HepG2 (cell line): ENCODE measurements at regions of chr2 and their contacts with region 1.

Region 1: DNA sequence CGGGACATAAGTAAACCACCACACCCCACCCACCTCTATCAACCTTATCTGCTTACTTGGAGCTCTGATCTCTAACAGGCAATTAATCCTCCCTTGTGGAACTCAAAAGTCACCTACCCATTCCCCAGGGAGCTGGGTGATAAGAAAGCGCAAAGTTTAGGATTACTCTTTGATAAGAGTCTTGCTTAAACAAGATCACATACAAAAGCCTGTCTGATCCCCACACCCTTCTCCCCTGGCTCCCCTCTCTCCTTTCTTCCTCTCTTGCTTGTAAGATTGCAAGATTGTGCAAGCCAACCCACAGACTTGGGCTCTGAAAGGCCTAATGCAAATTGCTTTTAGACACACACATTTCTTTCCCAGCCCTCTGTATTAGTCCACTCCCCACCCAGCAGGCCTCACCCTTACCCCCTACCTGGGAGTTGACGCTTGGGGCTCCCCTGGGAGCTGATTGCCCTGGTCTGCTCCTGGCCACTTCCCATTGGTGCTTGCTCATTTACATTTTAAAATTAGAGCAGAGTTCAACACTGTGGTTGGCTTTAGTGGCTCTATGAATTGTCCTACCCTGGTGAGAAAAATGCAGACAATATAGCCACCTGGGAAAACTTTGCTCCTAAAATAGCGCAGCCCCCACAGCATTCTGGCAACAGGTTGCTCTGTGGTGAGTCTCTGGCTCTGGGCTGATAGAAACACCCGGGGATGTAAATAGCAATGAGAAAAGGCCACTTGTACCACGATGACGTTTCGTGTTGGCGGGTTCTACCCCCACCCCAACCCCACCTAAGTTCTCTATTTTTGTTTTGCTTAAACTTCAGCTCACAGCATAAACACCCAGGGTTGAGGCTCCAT is 92.8 kb upstream of the MSH2 start:
- DNase-seq: peak; percentile 96
- ATAC-seq: peak; percentile 83
- H3K4me3 ChIP-seq: peak overlapping the region; percentile 14 to 59 (median 45)
- H3K27ac ChIP-seq: peak overlapping the region; percentile 77
- H3K4me1 ChIP-seq: peaks cover 95% of the 10 kb centered on the region
- H3K27me3 ChIP-seq: no peaks in the 10 kb centered on the region
- CTCF ChIP-seq: no peak
- EP300 ChIP-seq: peak in 1 of 2 experiments; percentile 96; a peak in 2 of 4 replicates
- POLR2A ChIP-seq: peak in 1 of 2 experiments; percentile 20; a peak in 1 of 4 replicates
- RAD21 ChIP-seq: no peak

Region 2: GRCh38 chr2:47272031-47272864 is 37.9 kb before region 1 on chr2:
- CTCF ChIA-PET with region 1: no interaction called
- POLR2A ChIA-PET with region 1: no interaction called
- in situ Hi-C with region 1: no loop called
- intact Hi-C with region 1: loop called (anchors 2 kb)
- DNase-seq: no peak
- ATAC-seq: peak; percentile 89
- H3K4me3 ChIP-seq: peak overlapping the region; percentile 54 to 75 (median 68); a peak in 5 of 6 replicates
- H3K27ac ChIP-seq: no peak overlapping the region
- H3K4me1 ChIP-seq: peaks cover 66% of the 10 kb centered on the region
- H3K27me3 ChIP-seq: peaks cover 0 to 2% of the 10 kb centered on the region in 2 experiments; a peak in 1 of 5 replicates
- CTCF ChIP-seq: peak; percentile 98
- EP300 ChIP-seq: no peak
- POLR2A ChIP-seq: no peak
- RAD21 ChIP-seq: peak; percentile 97

Region 3: GRCh38 chr2:47297767-47298425 is 12.3 kb before region 1 on chr2:
- CTCF ChIA-PET with region 1: no interaction called
- POLR2A ChIA-PET with region 1: no interaction called
- in situ Hi-C with region 1: no loop called
- intact Hi-C with region 1: no loop called
- DNase-seq: no peak
- ATAC-seq: no peak
- H3K4me3 ChIP-seq: no peak overlapping the region
- H3K27ac ChIP-seq: no peak overlapping the region
- H3K4me1 ChIP-seq: peaks cover 1% of the 10 kb centered on the region
- H3K27me3 ChIP-seq: no peaks in the 10 kb centered on the region
- CTCF ChIP-seq: no peak
- EP300 ChIP-seq: no peak
- POLR2A ChIP-seq: no peak
- RAD21 ChIP-seq: no peak